ENCODE measurements at regions of chr1 and their contacts with region 1.

Region 1: DNA sequence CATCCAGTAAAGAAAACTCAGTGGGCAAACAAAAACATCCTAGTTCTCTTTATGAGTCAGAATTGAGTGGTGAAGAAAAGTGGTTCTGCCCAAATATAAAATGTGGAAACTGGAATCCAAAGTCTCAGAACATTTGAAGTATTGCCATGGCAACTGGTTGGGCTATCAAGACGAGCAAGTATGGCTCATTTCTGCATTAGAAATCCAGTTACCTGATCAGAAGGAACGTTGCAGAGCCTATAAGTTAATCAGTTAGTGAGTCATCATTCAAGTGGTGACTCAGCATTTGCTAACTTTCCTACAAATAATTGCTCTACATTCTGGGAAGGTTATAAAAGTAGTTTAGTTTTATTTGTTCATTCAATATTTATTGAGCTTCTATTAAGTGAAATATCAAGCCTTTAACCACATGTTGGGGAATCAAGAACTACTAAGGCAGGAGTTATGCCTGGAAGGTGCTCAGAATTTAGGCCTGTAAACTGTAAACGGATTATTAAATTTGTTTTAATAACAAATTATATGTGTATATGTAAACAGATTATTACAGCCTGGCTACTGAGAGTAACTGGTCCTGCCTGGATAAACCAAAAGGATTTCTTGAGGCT is 104.3 kb downstream of the PAPPA2 start:
- DNase-seq: no peak
- ATAC-seq: no peak
- H3K4me3 ChIP-seq: no peak overlapping the region
- H3K27ac ChIP-seq: no peak overlapping the region
- H3K4me1 ChIP-seq: no peaks in the 10 kb centered on the region
- H3K27me3 ChIP-seq: no peaks in the 10 kb centered on the region

Region 2: DNA sequence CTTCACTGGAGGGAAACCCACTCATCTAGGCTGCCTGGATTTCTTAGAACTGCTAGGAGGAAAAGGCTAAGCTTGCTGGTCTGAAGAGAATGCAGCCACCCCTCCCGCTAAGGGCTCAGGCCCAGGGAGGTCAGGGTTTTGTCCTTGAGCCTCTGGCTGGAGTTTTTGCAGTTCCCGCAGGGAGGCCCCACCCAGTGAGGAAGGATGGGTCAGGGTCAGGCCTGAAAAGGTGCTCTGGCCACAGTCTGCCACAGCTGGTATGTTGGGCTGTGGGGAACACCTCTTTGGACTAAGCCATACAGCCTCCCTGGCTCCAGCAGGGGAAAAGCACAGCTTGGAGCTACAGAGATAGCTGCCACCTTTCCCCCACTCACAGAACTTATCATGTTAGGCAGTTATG is 175.7 kb before region 1 on chr1:
- intact Hi-C with region 1: no loop called
- DNase-seq: no peak
- ATAC-seq: no peak
- H3K4me3 ChIP-seq: no peak overlapping the region
- H3K27ac ChIP-seq: no peak overlapping the region
- H3K4me1 ChIP-seq: no peaks in the 10 kb centered on the region
- H3K27me3 ChIP-seq: no peaks in the 10 kb centered on the region

Region 3: GRCh38 chr1:176691251-176692228 is 124.2 kb after region 1 on chr1:
- intact Hi-C with region 1: loop called in 2 of 4 experiments (anchors 5 to 10 kb)
- DNase-seq: no peak
- ATAC-seq: peak; percentile 53 to 62
- H3K4me3 ChIP-seq: no peak overlapping the region
- H3K27ac ChIP-seq: peak overlapping the region; percentile 86
- H3K4me1 ChIP-seq: no peaks in the 10 kb centered on the region
- H3K27me3 ChIP-seq: no peaks in the 10 kb centered on the region

Measured in right cardiac atrium (tissue), 5 donors.